GM12878 (cell line): ENCODE measurements at regions of chr19 and their contacts with region 1.

Region 1: DNA sequence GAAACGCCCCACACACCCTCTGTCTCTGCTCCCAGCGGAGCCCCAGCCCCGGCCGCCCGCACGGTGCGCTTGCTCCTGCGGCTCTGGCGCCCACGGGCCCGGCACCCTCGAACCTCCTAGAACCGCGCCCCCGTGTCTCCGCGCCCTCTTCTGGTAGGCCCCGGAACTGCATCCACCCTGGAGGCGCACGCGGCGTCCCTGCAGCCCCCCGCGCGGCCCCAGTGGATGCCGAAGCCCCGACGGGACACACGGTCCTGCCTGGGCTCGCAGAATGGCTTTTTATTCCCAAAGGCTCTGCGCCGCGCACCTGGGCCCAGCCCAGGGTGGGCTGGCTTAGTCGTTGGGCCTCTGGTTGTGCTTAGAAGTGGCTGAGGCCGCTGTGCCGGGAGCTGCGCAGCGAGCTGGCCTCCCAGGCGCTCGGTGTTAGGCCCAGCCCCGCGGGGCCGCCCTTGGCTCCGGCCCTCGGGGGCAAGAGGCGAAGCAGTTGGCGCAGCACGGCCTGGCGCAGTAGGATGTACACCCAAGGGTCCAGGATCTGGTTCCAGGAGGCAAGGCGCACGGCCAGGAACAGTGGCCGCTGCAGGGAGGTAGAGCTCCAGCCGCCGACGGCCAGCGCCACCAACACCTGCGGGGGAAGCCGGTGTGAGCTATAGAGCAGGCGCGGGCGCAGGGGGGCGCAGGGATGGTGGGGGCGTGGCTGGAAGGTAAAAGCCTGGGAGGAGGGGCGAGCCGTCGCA is 2.8 kb downstream of the PTGER1 start:
- DNase-seq: no peak
- ATAC-seq: peak; percentile 86
- H3K4me3 ChIP-seq: no peak overlapping the region
- H3K27ac ChIP-seq: no peak overlapping the region
- H3K4me1 ChIP-seq: no peaks in the 10 kb centered on the region
- H3K27me3 ChIP-seq: peaks cover 5 to 6% of the 10 kb centered on the region in 2 experiments; a peak in 3 of 4 replicates
- CTCF ChIP-seq: peak; percentile 77 to 99 (median 80)
- EP300 ChIP-seq: no peak
- POLR2A ChIP-seq: peak; percentile 64
- RAD21 ChIP-seq: peak; percentile 36

Region 2: GRCh38 chr19:14354445-14354844 is 117.9 kb before region 1 on chr19:
- CTCF ChIA-PET with region 1: interaction called, 5 read pairs
- POLR2A ChIA-PET with region 1: no interaction called
- RAD21 ChIA-PET with region 1: no interaction called
- SMC1A ChIA-PET with region 1: no interaction called
- in situ Hi-C with region 1: no loop called
- intact Hi-C with region 1: loop called (anchors 10 kb)
- DNase-seq: no peak
- ATAC-seq: peak; percentile 60
- H3K4me3 ChIP-seq: no peak overlapping the region
- H3K27ac ChIP-seq: no peak overlapping the region
- H3K4me1 ChIP-seq: peaks cover 25% of the 10 kb centered on the region
- H3K27me3 ChIP-seq: no peaks in the 10 kb centered on the region
- CTCF ChIP-seq: no peak
- EP300 ChIP-seq: no peak
- POLR2A ChIP-seq: no peak
- RAD21 ChIP-seq: no peak

Region 3: DNA sequence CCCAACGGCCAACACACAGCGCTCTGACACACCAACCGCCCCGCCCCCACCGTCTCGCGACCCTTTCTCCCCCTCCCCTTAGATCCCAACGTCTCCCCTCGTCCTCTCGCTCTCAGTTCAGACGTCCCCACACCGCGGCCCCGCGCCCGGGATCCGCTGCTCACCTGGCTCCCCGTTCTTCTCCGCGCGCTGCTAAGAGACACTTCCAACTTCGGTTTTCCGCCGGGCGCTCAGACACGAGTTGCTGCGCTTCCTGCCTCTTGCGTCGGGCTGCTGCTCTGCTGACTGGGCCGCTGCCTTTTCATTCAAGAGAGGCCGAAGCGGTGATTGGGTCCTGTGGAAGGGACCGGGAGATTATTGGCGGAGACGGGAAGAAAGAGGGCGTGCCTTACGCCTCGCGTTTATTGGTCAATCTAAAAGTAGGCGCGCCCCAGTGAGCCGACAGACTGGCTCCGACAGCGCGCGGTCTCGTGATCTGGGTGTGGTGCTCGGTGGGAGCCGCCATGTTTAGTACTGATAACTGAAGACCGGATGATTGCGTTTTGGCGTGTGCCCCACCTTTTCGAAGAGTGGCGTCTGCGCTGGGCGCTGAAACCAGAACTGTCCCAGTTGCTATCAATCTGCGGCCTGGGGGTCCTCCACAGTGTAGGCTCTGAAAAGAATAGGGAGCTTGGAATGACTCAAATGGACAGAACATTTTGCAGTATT is 53.1 kb before region 1 on chr19 and contains the start of gene DDX39A:
- CTCF ChIA-PET with region 1: no interaction called
- POLR2A ChIA-PET with region 1: no interaction called
- RAD21 ChIA-PET with region 1: no interaction called
- SMC1A ChIA-PET with region 1: no interaction called
- in situ Hi-C with region 1: no loop called
- intact Hi-C with region 1: loop called (anchors 5 kb)
- DNase-seq: peak; percentile 97
- ATAC-seq: peak; percentile 94
- H3K4me3 ChIP-seq: peak within 1 kb of the TSS; percentile 61
- H3K27ac ChIP-seq: peak within 1 kb of the TSS; percentile 95
- H3K4me1 ChIP-seq: peaks cover 23% of the 10 kb centered on the region
- H3K27me3 ChIP-seq: no peaks in the 10 kb centered on the region
- CTCF ChIP-seq: no peak
- EP300 ChIP-seq: 0 out of 4 replicates have a peak, but pooled peaks of 1 of the 2 experiments have one; percentile 22
- POLR2A ChIP-seq: peak; percentile 99
- RAD21 ChIP-seq: no peak
- polyA plus RNA-seq, gene DDX39A: 168 to 212 TPM